ENCODE measurements at regions of chr7 and their contacts with region 1.

Region 1: GRCh38 chr7:71735961-71736556 is 604.1 kb downstream of the GALNT17 start:
- DNase-seq: no peak
- H3K4me3 ChIP-seq: no peak overlapping the region
- H3K27ac ChIP-seq: no peak overlapping the region
- H3K4me1 ChIP-seq: no peaks in the 10 kb centered on the region
- H3K27me3 ChIP-seq: peaks cover 12% of the 10 kb centered on the region
- CTCF ChIP-seq: peak; percentile 91

Region 2: DNA sequence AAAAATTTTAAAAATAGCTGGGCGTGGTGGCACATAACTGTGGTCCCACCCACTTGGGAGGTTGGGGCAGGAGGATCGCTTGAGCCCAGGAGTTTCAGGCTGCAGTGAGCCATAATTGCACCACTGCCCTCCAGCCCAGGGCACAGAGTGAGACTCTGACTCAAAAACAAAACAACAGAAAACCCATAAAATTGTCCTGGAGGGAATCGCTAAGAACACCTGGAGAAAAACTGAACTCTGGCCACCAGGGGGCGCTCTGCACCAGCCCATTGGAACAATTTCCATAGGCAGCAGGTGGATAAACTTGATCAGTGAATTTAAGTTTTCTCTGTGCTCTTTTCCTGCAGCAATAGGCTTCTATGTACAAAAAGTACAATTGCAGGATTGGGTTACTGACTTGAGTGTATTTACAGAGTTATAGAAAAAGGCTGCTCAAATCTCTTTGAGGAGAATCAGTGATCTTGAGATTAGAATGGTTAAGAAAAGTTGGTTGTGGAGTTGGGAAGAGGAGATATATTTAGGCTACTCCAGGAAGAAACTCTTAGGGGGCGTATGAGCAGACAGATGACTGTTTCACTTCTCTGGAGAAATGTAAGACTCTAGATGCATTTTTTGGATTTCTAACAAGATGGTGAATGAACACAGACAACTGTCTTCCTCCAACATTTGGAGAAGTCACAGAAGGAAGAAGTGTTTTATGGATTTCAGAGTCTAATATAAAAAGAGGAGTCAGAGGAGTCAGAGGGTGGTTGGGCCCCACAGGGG is 879.0 kb before region 1 on chr7:
- intact Hi-C with region 1: loop called (anchors 5 kb)
- DNase-seq: peak; percentile 62
- H3K4me3 ChIP-seq: no peak overlapping the region
- H3K27ac ChIP-seq: no peak overlapping the region
- H3K4me1 ChIP-seq: no peaks in the 10 kb centered on the region
- H3K27me3 ChIP-seq: peaks cover 17% of the 10 kb centered on the region
- CTCF ChIP-seq: peak; percentile 89

Measured in left ventricle myocardium inferior (tissue), 1 donor.